ENCODE measurements at regions of chr16 and their contacts with region 1.

Region 1: DNA sequence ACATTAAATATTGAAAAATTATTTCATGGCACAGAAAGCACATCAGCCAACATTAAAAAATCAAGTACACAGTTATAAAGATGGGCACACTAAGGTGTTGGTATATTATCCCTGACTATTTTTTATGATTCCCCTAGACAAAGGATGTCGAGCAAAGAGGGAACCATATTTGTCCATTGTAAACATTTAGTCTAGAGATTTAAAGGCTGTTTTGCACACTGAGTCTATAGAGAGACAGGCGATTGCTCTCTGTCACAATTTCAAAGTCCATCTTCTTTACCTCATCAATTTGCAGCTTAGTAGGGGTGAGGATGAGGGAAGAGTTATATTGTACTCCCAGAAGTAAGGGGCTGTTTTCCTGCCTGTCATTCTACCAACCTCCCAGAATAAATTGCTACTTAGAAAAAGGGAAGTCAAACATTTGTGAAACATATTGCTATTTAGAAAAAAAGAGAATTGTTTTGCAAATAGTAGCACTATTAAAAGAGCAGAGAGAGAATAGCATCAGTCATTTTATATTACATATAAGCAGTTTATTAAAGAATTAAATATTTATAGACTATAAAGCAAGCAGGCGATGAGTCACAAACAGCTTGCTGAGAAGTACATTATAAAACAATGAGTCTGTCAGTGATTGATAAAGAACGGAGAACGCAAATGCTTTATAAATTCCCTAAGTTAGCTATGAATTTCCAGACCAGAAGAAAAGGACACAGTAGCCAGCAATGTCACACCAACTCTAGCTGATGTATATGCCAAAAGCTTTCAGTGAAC is 270.6 kb upstream of the PMFBP1 start:
- DNase-seq: no peak

Region 2: GRCh38 chr16:72371307-72372086 is 71.1 kb before region 1 on chr16:
- intact Hi-C with region 1: no loop called
- DNase-seq: no peak

Region 3: DNA sequence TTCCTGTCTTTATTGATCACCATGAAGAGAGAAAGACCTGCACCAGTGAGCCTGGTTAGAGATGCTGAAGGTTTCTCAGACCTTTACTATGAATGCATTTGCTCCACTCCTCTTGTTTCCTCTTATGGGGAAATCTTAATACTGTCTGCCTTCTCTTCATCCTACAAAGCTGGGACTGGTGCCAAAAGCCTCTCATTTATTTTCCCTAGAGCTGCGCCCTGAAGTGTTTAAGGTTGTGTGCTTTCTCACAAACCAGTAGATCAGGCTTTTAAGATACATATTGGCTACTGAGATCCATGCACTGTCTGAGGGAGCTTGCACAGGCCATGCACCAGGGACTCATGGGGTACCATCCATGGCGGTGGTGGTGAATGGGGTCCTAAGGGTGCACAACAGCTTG is 15.5 kb after region 1 on chr16:
- intact Hi-C with region 1: no loop called
- DNase-seq: no peak

Region 4: DNA sequence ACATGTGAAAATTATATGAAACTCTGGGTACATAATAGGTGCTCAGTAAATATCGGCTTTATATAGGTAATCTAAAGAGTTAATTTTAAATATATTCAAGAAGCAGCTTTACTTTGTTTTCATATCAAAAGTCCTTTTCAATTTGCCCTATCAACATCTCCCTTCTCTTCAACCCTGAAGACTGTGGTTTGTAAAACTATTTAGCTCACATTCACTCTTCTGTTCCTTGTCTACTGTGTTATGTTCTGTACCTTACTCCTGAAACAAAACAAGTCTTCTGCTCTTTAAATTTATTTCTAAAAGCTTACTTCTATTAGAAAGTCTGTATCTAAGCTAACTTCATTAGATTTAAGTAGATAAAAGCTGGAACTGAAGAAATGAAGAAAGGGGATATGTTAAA is 31.1 kb after region 1 on chr16:
- intact Hi-C with region 1: loop called in 1 of 2 experiments (anchors 2 kb)
- DNase-seq: no peak

Measured in posterior vena cava (tissue), 2 donors.